A673 (cell line): ENCODE measurements at regions of chr10 and their contacts with region 1.

Region 1: GRCh38 chr10:37700886-37701780 is 156.3 kb downstream of the ZNF248 start:
- DNase-seq: no peak
- H3K4me3 ChIP-seq: no peak overlapping the region
- H3K27ac ChIP-seq: no peak overlapping the region
- H3K4me1 ChIP-seq: no peaks in the 10 kb centered on the region
- H3K27me3 ChIP-seq: no peaks in the 10 kb centered on the region
- CTCF ChIP-seq: no peak

Region 2: GRCh38 chr10:37684765-37685164 is 16.4 kb before region 1 on chr10:
- CTCF ChIA-PET with region 1: no interaction called
- POLR2A ChIA-PET with region 1: no interaction called
- intact Hi-C with region 1: loop called (anchors 1 kb)
- DNase-seq: no peak
- H3K4me3 ChIP-seq: no peak overlapping the region
- H3K27ac ChIP-seq: no peak overlapping the region
- H3K4me1 ChIP-seq: no peaks in the 10 kb centered on the region
- H3K27me3 ChIP-seq: no peaks in the 10 kb centered on the region
- CTCF ChIP-seq: no peak